ENCODE measurements at regions of chr6 and their contacts with region 1.

Region 1: GRCh38 chr6:89940225-89941027 is 46.2 kb downstream of the GJA10 start:
- DNase-seq: peak; percentile 70 to 80
- ATAC-seq: peak; percentile 94 to 95
- H3K4me3 ChIP-seq: no peak overlapping the region
- H3K27ac ChIP-seq: peak overlapping the region; percentile 18 to 60 (median 47)
- H3K4me1 ChIP-seq: peaks cover 25 to 27% of the 10 kb centered on the region in 2 donors
- H3K27me3 ChIP-seq: no peaks in the 10 kb centered on the region
- CTCF ChIP-seq: peak; percentile 63 to 74 (median 73)
- POLR2A ChIP-seq: no peak

Region 2: DNA sequence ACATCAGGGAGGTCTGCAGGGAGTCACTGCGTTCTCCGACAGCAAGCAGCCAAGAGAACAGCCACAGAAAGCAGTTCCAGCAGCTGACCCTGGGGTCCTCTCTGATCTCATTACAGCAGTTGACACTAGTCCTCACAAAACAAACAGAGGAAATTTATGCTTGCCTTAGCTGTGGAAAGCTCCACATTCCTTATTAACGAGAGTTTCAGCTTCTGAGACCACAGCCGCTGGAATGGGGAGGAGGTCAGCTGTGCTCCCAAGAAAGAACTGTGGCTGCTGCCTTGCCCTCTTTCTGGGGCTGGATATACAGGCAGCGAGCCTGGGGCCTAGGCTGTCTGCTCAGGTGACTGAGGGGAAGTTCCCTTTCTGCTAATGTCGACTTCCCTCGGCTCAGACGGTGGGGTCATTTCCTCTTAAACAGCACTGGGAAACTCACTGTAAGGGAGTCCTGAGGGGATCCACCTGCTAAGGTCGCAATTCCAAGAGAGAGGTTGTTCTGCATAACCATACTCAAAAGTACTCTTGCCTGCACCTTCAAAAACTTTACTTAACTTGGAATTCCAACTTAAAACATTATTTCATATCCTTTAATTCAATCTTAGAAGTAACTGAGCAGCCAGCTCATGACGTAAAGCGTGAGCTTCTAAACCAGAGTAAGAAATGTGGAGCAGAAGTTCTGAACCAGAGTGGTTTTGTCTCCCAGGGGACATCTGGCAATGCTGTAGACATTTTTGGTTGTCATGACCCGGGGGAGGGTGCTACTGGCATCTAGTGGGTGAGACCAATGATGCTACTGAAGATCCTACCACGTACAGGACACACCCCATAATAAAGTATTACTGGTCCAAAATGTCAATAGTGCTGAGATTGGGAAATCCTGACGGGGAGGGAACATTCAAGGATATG is 275.9 kb after region 1 on chr6:
- in situ Hi-C with region 1: no loop called
- intact Hi-C with region 1: loop called (anchors 5 kb)
- DNase-seq: peak in 1 of 2 donors; percentile 36
- ATAC-seq: no peak
- H3K4me3 ChIP-seq: no peak overlapping the region
- H3K27ac ChIP-seq: peak overlapping the region; percentile 86 to 96 (median 93)
- H3K4me1 ChIP-seq: peaks cover 46 to 73% of the 10 kb centered on the region in 2 donors
- H3K27me3 ChIP-seq: no peaks in the 10 kb centered on the region
- CTCF ChIP-seq: no peak
- POLR2A ChIP-seq: no peak

Region 3: GRCh38 chr6:90304308-90304707 is 363.9 kb after region 1 on chr6:
- in situ Hi-C with region 1: loop called in 1 of 4 experiments (anchors 5 kb)
- intact Hi-C with region 1: no loop called
- DNase-seq: no peak
- ATAC-seq: no peak
- H3K4me3 ChIP-seq: no peak overlapping the region
- H3K27ac ChIP-seq: no peak overlapping the region
- H3K4me1 ChIP-seq: no peaks in the 10 kb centered on the region
- H3K27me3 ChIP-seq: no peaks in the 10 kb centered on the region
- CTCF ChIP-seq: no peak
- POLR2A ChIP-seq: no peak

Region 4: GRCh38 chr6:90383196-90383822 is 442.9 kb after region 1 on chr6:
- in situ Hi-C with region 1: loop called in 1 of 4 experiments (anchors 10 kb)
- intact Hi-C with region 1: no loop called
- DNase-seq: no peak
- ATAC-seq: no peak
- H3K4me3 ChIP-seq: no peak overlapping the region
- H3K27ac ChIP-seq: no peak overlapping the region
- H3K4me1 ChIP-seq: peaks cover 5 to 15% of the 10 kb centered on the region in 2 donors
- H3K27me3 ChIP-seq: no peaks in the 10 kb centered on the region
- CTCF ChIP-seq: no peak
- POLR2A ChIP-seq: no peak

Region 5: DNA sequence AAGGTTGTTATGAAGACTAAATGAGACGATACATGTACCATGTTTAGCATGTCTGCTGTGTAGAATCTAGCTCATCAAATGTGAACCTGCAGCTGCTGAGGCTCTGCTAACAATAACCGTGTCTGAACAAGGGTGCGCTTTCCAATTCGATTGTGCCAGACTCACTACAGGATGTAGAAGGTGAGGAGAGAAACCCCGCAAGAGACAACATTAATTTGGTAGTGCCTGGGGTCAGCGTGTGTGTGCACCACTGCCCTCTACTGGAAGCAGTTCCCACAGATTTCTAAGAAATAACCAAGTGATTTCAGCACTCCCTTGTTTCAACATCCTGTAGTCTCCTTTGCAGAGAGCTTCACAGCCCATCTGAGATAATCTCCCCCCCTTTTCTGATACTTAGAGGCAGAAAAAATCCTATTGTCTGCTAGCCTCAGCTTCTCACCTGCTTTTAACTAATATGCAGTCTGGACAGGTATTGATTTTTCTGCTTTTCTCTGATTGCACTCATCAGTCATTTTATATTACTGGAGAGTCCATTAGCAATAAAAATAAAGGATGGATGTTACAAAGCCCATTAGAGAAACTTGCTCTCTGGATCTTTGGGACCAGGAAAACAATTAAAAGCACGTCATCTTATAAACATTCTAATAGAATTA is 452.9 kb after region 1 on chr6:
- in situ Hi-C with region 1: loop called (anchors 10 kb)
- intact Hi-C with region 1: loop called (anchors 1 kb)
- DNase-seq: peak; percentile 28 to 42
- ATAC-seq: peak; percentile 75 to 95
- H3K4me3 ChIP-seq: no peak overlapping the region
- H3K27ac ChIP-seq: no peak overlapping the region
- H3K4me1 ChIP-seq: no peaks in the 10 kb centered on the region
- H3K27me3 ChIP-seq: no peaks in the 10 kb centered on the region
- CTCF ChIP-seq: peak; percentile 70 to 85 (median 79)
- POLR2A ChIP-seq: no peak

Measured in gastrocnemius medialis (tissue), 4 donors.